Activated naive CD4-positive, alpha-beta T cell treated with anti-CD3 and anti-CD28 coated beads for 36 hours (primary cell): ENCODE measurements at regions of chr10 and their contacts with region 1.

Region 1: DNA sequence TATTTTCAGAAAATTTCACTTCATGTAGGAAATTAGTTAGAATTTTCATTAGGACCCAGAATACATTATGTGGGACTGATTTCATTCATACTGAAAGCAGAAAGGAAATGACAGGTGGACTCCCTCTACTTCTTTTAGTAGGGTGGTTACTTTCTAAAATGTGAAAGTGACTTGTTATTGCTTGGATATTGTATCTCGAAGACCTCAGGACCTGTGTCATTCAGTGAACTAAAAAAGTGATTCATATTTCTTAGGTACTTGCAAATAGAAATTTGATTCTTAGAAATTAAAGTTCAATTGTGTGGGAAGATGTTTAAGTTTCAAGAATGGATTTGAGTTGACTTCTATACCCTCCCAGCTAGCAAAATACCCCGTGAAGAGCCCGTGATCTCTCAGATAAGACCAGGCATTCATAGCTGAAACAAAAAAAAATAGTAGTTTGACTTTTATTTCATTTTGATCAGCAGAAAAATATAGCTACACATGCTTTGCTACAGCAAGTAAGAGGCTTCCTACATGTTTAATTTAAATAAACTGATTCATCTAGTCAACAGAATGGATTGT is 1037.1 kb downstream of the GATA3 start:
- DNase-seq: peak; percentile 23
- H3K4me3 Mint-ChIP-seq: no peak overlapping the region
- H3K27ac Mint-ChIP-seq: no peak overlapping the region
- H3K4me1 Mint-ChIP-seq: peaks cover 21% of the 10 kb centered on the region
- H3K27me3 Mint-ChIP-seq: peaks cover 2% of the 10 kb centered on the region

Region 2: DNA sequence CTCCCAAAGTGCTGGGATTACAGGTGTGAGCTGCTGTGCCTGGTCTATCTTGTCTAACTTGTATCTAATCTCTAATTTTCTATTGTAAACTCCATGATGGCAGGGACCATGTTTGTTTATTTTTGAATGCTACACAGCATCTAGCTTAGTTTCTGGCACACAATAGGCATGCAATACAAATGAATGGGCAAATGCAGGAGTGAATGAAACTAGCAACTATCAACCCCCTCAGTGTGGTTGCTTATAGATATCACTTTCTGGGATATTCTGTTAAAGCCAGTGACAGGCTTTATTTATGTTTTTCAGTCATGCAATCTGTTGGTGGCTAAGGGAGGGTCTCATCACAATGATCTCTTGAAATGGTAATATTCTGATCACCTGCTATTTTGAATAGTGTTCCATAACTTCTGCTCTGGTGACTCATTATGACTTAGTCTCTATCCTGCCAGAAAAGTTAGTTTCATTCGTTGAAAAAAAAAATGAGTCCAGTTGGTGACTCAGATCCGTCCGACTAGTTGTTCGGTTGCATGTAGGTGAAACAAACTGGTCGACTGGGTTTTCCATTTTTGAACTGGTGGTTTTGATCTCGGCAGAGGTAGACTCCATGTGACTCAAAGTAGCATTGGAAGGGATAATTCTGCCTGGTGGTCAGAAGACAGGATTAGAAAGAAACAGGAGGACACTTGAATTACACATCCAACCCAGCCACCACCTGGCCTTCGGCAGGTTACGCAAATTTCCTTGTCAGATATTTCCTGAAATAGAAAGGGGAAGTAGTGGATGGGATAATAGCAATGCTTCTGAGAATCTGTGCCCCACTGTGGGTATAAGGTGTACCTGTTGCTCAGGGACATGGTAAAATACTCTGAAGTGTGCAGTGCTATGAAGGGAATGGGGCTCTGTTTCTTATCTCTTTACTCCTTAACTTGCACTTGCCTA is 960.4 kb before region 1 on chr10:
- CTCF ChIA-PET with region 1: no interaction called
- intact Hi-C with region 1: loop called (anchors 5 kb)
- DNase-seq: peak; percentile 61
- H3K4me3 Mint-ChIP-seq: no peak overlapping the region
- H3K27ac Mint-ChIP-seq: no peak overlapping the region
- H3K4me1 Mint-ChIP-seq: peaks cover 31% of the 10 kb centered on the region
- H3K27me3 Mint-ChIP-seq: peaks cover 6% of the 10 kb centered on the region

Region 3: DNA sequence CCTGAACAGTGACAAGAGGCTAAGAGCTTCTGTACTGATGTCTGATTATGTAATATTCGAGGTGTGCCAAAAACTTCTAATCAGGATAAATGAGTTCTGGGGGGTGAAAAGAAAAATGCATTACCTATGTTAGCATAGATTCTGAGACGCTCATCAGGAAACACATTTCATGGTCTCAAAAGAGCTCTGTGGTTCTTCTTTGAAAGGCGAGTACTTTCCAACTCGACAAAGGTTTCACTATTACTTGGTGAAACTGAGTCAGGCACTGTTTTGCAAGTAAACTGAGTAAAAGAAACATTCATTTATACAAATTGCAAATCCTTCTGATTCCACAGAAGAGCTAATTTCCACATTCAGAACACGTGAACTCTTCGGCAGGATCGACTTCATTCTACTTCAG is 513.9 kb before region 1 on chr10:
- CTCF ChIA-PET with region 1: no interaction called
- intact Hi-C with region 1: loop called (anchors 5 kb)
- DNase-seq: peak; percentile 33
- H3K4me3 Mint-ChIP-seq: no peak overlapping the region
- H3K27ac Mint-ChIP-seq: no peak overlapping the region
- H3K4me1 Mint-ChIP-seq: peaks cover 28% of the 10 kb centered on the region
- H3K27me3 Mint-ChIP-seq: peaks cover 19% of the 10 kb centered on the region

Region 4: DNA sequence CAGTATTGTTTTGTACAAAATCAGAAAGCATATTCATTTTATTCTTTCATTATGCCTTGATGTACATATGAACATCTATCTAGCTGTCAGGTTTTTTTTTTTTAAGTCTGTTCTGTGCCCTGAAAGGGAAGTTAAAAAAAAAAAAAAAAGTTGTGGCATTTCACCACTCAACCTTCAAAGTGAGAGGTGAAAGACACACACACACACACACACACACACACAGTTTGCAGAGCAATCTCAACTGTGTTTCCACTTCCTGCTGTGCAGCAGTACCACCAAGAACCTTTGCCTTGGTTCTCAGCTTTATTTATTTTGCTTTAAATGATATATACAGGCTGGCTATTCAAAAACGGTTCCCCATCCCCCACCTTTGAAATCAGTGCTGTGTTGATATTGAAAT is 81.5 kb before region 1 on chr10:
- CTCF ChIA-PET with region 1: interaction called, 4 read pairs
- intact Hi-C with region 1: loop called (anchors 2 kb)
- DNase-seq: peak; percentile 39
- H3K4me3 Mint-ChIP-seq: no peak overlapping the region
- H3K27ac Mint-ChIP-seq: no peak overlapping the region
- H3K4me1 Mint-ChIP-seq: peaks cover 47% of the 10 kb centered on the region
- H3K27me3 Mint-ChIP-seq: no peaks in the 10 kb centered on the region

Region 5: GRCh38 chr10:9051323-9051974 is 40.2 kb before region 1 on chr10:
- CTCF ChIA-PET with region 1: no interaction called
- intact Hi-C with region 1: loop called (anchors 5 kb)
- DNase-seq: no peak
- H3K4me3 Mint-ChIP-seq: no peak overlapping the region
- H3K27ac Mint-ChIP-seq: no peak overlapping the region
- H3K4me1 Mint-ChIP-seq: peaks cover 14% of the 10 kb centered on the region
- H3K27me3 Mint-ChIP-seq: no peaks in the 10 kb centered on the region

Region 6: GRCh38 chr10:9294865-9295264 is 203.3 kb after region 1 on chr10:
- CTCF ChIA-PET with region 1: no interaction called
- intact Hi-C with region 1: loop called (anchors 1 kb)
- DNase-seq: peak; percentile 17
- H3K4me3 Mint-ChIP-seq: no peak overlapping the region
- H3K27ac Mint-ChIP-seq: no peak overlapping the region
- H3K4me1 Mint-ChIP-seq: peaks cover 17% of the 10 kb centered on the region
- H3K27me3 Mint-ChIP-seq: peaks cover 8% of the 10 kb centered on the region